Activated naive CD4-positive, alpha-beta T cell treated with anti-CD3 and anti-CD28 coated beads for 36 hours (primary cell): ENCODE measurements at regions of chr16 and their contacts with region 1.

Region 1: GRCh38 chr16:11797166-11797956 is at the start of gene ZC3H7A:
- DNase-seq: peak; percentile 95
- H3K4me3 Mint-ChIP-seq: peak within 1 kb of the TSS; percentile 92
- H3K27ac Mint-ChIP-seq: peak within 1 kb of the TSS; percentile 93
- H3K4me1 Mint-ChIP-seq: peaks cover 72% of the 10 kb centered on the region
- H3K27me3 Mint-ChIP-seq: no peaks in the 10 kb centered on the region
- total RNA-seq, gene ZC3H7A: 123 to 127 TPM

Region 2: GRCh38 chr16:11361701-11362451 is 435.5 kb before region 1 on chr16:
- CTCF ChIA-PET with region 1: no interaction called
- intact Hi-C with region 1: loop called (anchors 5 kb)
- DNase-seq: peak; percentile 76
- H3K4me3 Mint-ChIP-seq: peak overlapping the region; percentile 48
- H3K27ac Mint-ChIP-seq: peak overlapping the region; percentile 21
- H3K4me1 Mint-ChIP-seq: peaks cover 52% of the 10 kb centered on the region
- H3K27me3 Mint-ChIP-seq: no peaks in the 10 kb centered on the region

Region 3: DNA sequence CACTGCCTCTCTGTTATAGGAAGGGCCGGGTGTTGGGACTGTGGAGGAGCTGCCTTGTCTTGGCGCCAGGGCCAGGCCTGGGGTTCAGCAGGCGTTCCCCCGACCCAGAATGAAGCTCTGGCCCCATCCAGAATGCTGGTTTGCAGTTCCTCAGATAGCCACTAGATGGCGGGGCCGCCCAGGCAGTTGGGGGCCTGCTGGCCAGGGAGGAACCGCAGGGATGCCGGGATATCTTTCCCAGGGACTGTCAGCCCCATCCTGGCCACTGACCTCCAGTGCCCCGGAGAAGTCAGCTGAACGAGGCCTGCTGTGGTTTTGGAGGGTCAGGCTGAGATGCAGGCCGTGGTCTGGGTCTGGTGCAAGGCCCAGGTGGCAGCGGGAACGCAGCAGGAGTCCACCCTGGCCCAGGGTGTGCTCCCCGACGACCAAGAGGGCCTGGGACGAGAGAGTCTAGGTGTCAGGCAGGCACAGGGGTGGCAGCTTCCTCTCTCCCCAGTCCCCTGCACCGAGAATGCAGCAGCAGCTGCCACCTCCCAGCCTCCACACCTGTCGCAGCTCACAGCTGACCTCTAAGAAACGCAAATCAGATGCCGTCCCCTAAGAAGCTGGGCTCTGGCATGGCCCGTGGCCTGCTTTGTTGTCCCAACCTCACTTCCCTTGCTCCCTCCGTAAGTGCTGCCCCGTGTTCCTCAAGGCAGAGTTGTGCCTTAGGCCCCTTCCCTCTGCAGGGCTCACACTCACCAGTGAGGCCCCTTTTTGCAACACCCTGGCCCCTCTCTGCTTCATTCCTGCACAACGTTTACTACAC is 400.9 kb before region 1 on chr16:
- CTCF ChIA-PET with region 1: no interaction called
- intact Hi-C with region 1: no loop called
- DNase-seq: peak; percentile 77
- H3K4me3 Mint-ChIP-seq: no peak overlapping the region
- H3K27ac Mint-ChIP-seq: no peak overlapping the region
- H3K4me1 Mint-ChIP-seq: no peaks in the 10 kb centered on the region
- H3K27me3 Mint-ChIP-seq: no peaks in the 10 kb centered on the region

Region 4: DNA sequence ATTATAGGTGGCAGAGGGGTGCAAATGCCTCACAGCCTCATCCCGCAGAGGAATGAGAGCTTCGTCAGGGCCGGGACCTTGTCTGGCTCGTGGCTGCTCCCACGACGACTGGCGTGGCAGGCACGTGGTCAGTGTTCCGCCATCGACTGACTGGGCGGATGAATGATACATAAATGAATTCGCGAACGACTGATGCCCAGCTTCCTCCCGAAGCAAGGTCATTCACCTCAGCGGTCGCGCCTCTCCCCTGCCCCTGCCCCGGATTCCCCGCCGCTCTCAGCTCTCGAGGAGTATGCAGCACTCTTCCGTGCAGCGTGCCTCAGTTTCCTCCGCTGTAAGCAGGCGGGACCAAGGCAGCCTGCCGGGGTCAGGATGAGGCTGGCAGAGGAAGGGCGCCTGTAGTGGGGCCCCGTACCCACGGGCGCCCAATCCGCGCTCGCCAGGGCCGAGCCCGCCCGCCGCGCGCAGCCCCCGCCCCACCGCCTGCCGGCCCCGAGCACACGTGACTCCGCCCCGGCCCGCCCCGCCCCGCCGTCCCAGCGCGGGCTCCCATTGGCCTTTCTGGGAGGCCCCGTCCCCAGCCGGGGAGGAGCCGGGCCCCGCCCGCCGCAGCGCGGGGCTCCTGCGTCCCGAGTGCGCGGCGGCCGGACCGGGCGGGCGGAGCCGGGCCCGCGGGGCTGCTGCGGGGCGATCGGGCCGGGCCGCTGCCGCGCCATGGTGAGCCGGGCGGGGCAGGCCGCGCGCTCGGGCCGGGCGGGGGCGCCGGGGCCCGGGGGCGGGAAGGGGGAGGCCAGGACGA is 129.3 kb before region 1 on chr16 and contains the start of gene SNN:
- CTCF ChIA-PET with region 1: no interaction called
- intact Hi-C with region 1: loop called (anchors 2 kb)
- DNase-seq: peak; percentile 89
- H3K4me3 Mint-ChIP-seq: peak within 1 kb of the TSS; percentile 72
- H3K27ac Mint-ChIP-seq: no peak within 1 kb of the TSS
- H3K4me1 Mint-ChIP-seq: peaks cover 71% of the 10 kb centered on the region
- H3K27me3 Mint-ChIP-seq: no peaks in the 10 kb centered on the region
- total RNA-seq, gene SNN: 12.0 to 13.6 TPM

Region 5: GRCh38 chr16:11783319-11784037 is 13.9 kb before region 1 on chr16:
- CTCF ChIA-PET with region 1: interaction called, 47 read pairs
- intact Hi-C with region 1: loop called (anchors 1 kb)
- DNase-seq: peak; percentile 79
- H3K4me3 Mint-ChIP-seq: peak overlapping the region; percentile 71
- H3K27ac Mint-ChIP-seq: peak overlapping the region; percentile 98
- H3K4me1 Mint-ChIP-seq: peaks cover 72% of the 10 kb centered on the region
- H3K27me3 Mint-ChIP-seq: no peaks in the 10 kb centered on the region